ENCODE measurements at regions of chr7 and their contacts with region 1.

Region 1: GRCh38 chr7:117212969-117213877 is 109.6 kb downstream of the WNT2 start:
- DNase-seq: peak; percentile 42
- ATAC-seq: peak; percentile 88
- H3K4me3 ChIP-seq: no peak overlapping the region
- H3K27ac ChIP-seq: no peak overlapping the region
- H3K4me1 ChIP-seq: no peaks in the 10 kb centered on the region
- H3K27me3 ChIP-seq: no peaks in the 10 kb centered on the region
- CTCF ChIP-seq: peak; percentile 88 to 97 (median 92)
- EP300 ChIP-seq: no peak
- POLR2A ChIP-seq: no peak
- RAD21 ChIP-seq: peak; percentile 87

Region 2: DNA sequence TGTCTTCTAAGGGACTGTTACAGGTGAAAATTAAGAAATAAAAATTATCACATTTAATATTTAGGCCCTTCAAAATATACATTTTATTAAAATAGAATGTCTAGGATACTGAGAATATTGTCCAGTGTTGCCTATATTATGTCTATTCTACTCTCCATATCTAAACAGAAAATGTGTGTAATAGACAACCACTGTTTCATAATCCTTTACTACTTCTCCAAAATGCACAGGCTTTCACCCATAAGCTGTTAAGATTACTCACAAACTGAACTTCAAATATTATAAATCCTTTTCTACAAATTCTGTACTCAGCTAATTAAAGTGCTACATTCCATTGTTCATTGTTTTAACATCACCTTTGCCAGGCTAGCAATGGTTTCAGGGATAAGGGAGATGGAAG is 1125.9 kb before region 1 on chr7:
- CTCF ChIA-PET with region 1: no interaction called
- POLR2A ChIA-PET with region 1: no interaction called
- RAD21 ChIA-PET with region 1: no interaction called
- SMC1A ChIA-PET with region 1: no interaction called
- in situ Hi-C with region 1: no loop called
- intact Hi-C with region 1: no loop called
- DNase-seq: no peak
- ATAC-seq: no peak
- H3K4me3 ChIP-seq: no peak overlapping the region
- H3K27ac ChIP-seq: no peak overlapping the region
- H3K4me1 ChIP-seq: no peaks in the 10 kb centered on the region
- H3K27me3 ChIP-seq: no peaks in the 10 kb centered on the region
- CTCF ChIP-seq: no peak
- EP300 ChIP-seq: no peak
- POLR2A ChIP-seq: no peak
- RAD21 ChIP-seq: no peak

Region 3: DNA sequence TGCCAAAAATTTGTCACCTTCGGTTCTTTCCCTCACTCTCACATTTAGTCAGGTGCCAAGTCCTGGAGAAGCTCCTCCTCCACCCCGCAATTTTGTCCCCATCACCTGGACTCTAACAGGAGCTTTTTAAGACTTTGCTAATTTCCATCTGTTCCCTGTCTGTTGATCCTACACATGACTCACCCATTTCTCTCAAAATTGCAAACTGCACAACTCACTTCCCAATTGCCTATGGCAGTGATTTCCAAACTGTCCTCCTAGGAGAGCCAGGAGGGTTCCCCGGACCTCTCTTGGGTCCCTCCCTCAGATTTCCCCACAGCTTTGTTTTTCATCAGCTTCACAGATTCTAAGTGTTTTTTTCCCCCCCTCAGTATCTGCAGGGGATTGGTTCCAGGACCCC is 10.7 kb before region 1 on chr7:
- CTCF ChIA-PET with region 1: interaction called, 11 read pairs
- POLR2A ChIA-PET with region 1: interaction called, 3 read pairs
- RAD21 ChIA-PET with region 1: interaction called, 3 read pairs
- SMC1A ChIA-PET with region 1: interaction called, 15 read pairs
- in situ Hi-C with region 1: no loop called
- intact Hi-C with region 1: no loop called
- DNase-seq: no peak
- ATAC-seq: no peak
- H3K4me3 ChIP-seq: no peak overlapping the region
- H3K27ac ChIP-seq: no peak overlapping the region
- H3K4me1 ChIP-seq: no peaks in the 10 kb centered on the region
- H3K27me3 ChIP-seq: no peaks in the 10 kb centered on the region
- CTCF ChIP-seq: no peak
- EP300 ChIP-seq: no peak
- POLR2A ChIP-seq: no peak
- RAD21 ChIP-seq: no peak

Region 4: DNA sequence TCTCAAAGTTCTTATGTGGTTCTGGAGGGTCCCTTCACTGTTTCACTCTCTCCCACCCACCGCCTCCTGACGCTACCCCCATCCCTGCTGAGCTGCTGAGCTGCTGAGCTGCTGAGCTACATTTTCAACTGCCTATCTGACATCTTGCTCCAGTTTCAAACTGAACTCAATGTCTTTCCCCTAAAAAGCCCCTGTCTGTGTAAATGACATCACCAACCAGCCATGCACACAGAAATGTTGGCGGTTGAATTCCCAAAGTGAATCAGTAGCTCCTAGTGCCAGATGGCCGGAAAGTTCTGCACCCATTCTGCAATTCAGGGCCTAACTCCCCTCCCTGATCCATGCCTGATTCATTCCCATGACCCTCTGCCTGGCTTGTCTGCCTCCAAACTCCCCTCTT is 38.5 kb after region 1 on chr7:
- CTCF ChIA-PET with region 1: interaction called, 8 read pairs
- POLR2A ChIA-PET with region 1: interaction called, 3 read pairs
- RAD21 ChIA-PET with region 1: interaction called, 14 read pairs
- SMC1A ChIA-PET with region 1: interaction called, 8 read pairs
- in situ Hi-C with region 1: no loop called
- intact Hi-C with region 1: loop called (anchors 5 kb)
- DNase-seq: peak; percentile 35
- ATAC-seq: peak; percentile 84
- H3K4me3 ChIP-seq: no peak overlapping the region
- H3K27ac ChIP-seq: no peak overlapping the region
- H3K4me1 ChIP-seq: peaks cover 4% of the 10 kb centered on the region
- H3K27me3 ChIP-seq: no peaks in the 10 kb centered on the region
- CTCF ChIP-seq: no peak
- EP300 ChIP-seq: peak in 1 of 2 experiments; percentile 49; a peak in 1 of 4 replicates
- POLR2A ChIP-seq: no peak
- RAD21 ChIP-seq: no peak

Region 5: DNA sequence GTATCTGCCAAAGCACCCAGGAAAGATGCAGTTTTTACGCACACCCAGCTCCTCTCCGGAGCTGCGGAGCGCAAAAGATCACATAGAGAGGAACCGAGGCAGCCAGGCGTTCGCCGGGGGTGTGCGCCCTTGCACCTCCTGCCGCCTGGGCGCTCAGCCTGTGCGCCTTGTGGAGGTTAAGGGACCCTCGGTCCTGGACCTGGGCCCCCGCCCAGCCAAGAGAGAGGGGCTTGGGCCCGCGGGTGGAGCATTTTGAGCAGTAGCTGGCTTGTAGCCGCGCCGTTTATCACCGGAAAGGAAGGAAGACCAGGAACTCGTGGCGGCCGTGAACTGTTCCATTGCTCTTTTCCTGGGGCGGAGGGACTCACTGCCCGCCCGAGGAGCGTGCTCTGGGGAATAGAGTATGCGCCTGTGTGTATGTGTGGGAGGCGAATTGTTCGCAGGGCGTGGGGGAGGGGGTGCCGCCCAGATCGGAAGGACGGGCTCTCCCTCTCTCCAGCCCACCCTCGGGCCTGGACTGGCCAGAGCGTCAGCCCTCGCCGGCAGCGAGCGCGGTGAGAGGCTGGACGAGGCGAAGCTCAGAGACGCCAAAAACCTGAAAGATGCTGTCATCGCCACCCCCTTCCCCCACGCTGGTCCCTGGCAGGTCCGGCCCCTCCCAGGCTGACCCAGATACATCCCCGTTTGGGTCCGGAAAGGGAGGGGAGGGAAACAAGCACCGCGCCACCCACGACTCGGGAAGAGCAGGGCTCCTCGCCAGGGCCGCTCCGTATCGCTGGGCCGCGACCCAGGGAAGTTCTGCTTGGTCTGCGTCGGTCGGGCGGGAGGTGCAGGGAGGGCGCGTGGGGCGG is 110.9 kb after region 1 on chr7:
- CTCF ChIA-PET with region 1: interaction called, 4 read pairs
- POLR2A ChIA-PET with region 1: no interaction called
- RAD21 ChIA-PET with region 1: interaction called, 4 read pairs
- SMC1A ChIA-PET with region 1: interaction called, 15 read pairs
- in situ Hi-C with region 1: no loop called
- intact Hi-C with region 1: no loop called
- DNase-seq: no peak
- ATAC-seq: peak; percentile 64
- H3K4me3 ChIP-seq: peak overlapping the region; percentile 49
- H3K27ac ChIP-seq: no peak overlapping the region
- H3K4me1 ChIP-seq: no peaks in the 10 kb centered on the region
- H3K27me3 ChIP-seq: peaks cover 10 to 27% of the 10 kb centered on the region in 2 experiments
- CTCF ChIP-seq: no peak
- EP300 ChIP-seq: no peak
- POLR2A ChIP-seq: no peak
- RAD21 ChIP-seq: no peak

Region 6: DNA sequence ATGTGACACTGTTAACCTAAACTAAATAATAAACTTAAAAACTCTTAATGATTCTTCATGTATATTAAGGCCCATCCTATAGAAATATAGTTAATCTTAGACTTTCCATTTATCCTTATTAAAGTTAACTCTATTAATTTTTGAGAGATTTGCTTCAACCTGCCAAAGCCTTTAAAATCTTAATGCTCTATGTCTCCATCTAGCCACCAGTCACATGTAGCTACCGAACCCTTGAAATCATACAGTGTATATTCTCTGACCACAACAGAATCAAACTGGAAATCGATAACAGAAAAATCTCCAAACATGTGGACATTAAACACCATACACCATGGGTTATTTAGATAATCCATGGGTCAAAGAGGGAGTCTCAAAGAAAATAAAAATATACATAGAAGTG is 162.2 kb after region 1 on chr7:
- CTCF ChIA-PET with region 1: interaction called, 15 read pairs
- POLR2A ChIA-PET with region 1: no interaction called
- RAD21 ChIA-PET with region 1: interaction called, 36 read pairs
- SMC1A ChIA-PET with region 1: interaction called, 33 read pairs
- in situ Hi-C with region 1: no loop called
- intact Hi-C with region 1: no loop called
- DNase-seq: no peak
- ATAC-seq: no peak
- H3K4me3 ChIP-seq: no peak overlapping the region
- H3K27ac ChIP-seq: no peak overlapping the region
- H3K4me1 ChIP-seq: no peaks in the 10 kb centered on the region
- H3K27me3 ChIP-seq: no peaks in the 10 kb centered on the region
- CTCF ChIP-seq: peak in 1 of 3 experiments; percentile 22; a peak in 2 of 6 replicates
- EP300 ChIP-seq: no peak
- POLR2A ChIP-seq: no peak
- RAD21 ChIP-seq: 0 out of 2 replicates have a peak, but pooled peaks have one; percentile 22

Measured in GM12878 (cell line).